Dorsolateral prefrontal cortex (tissue), 120 donors: ENCODE measurements at regions of chr5 and their contacts with region 1.

Region 1: GRCh38 chr5:181243512-181244343 is at the start of gene RACK1:
- DNase-seq: peak; percentile 81 to 94 (median 91)
- H3K4me3 ChIP-seq: peak within 1 kb of the TSS; percentile 60 to 96 (median 84)
- H3K27ac ChIP-seq: peak within 1 kb of the TSS; percentile 51 to 99 (median 97)
- H3K27me3 ChIP-seq: no peaks in the 10 kb centered on the region
- CTCF ChIP-seq: peak in 23 of 56 donors; percentile 7 to 42 (median 22)
- total RNA-seq, gene RACK1: 308 to 570 (median 390) TPM

Region 2: DNA sequence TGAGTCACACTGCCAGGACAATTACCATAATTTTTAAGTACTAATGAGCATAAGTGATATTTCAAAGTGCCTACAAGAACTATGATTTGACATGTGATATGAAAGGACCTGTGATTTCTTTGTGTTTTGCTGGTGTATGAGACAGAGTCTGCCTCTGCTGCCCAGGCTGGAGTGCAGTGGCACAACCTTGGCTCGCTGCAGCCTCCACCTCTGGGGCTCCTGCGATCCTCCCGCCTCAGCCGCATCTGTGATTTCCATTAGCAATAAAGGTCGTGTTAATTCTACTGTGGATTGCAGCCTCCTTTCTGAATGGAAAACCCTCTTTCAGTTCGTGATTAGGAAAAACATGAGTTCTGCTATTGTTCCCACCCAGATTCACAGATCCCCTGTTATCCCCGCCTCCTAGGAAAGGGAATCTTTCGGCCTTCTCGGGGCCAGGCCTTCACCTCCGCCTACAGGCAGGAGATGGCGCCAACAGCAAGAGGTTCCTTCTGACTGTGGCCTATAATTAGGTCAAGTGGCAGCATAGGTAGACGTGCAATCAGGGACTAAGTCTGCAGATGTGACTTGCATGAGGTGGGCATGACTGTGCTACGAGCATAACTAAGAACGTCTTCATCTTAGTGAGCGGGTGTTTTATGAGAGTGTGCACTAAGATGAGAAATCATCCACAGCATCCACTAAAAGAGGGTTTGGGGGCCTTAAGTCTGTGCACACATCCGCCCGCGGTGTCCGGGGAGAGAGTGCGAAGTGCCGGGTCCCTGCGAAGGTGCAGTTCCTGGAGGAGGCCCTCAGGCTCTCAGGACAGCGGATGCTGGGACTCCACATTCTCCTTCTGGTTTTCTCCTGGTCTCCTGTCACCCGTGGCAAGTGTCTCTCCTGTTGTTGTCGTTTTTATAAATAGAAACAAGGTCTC is 61.8 kb before region 1 on chr5:
- intact Hi-C with region 1: loop called in 1 of 2 experiments (anchors 10 kb)
- DNase-seq: peak in 3 of 10 donors; percentile 23 to 69 (median 34)
- H3K4me3 ChIP-seq: no peak overlapping the region
- H3K27ac ChIP-seq: no peak overlapping the region
- H3K27me3 ChIP-seq: peaks cover 0 to 3% (median 0%) of the 10 kb centered on the region in 45 donors
- CTCF ChIP-seq: peak; percentile 14 to 77 (median 60)

Region 3: GRCh38 chr5:181260387-181261319 is 16.9 kb after region 1 on chr5 and contains the start of gene TRIM52:
- intact Hi-C with region 1: loop called in 1 of 2 experiments (anchors 2 kb)
- DNase-seq: peak; percentile 84 to 95 (median 92)
- H3K4me3 ChIP-seq: peak within 1 kb of the TSS; percentile 64 to 100 (median 95)
- H3K27ac ChIP-seq: peak within 1 kb of the TSS; percentile 75 to 99 (median 94)
- H3K27me3 ChIP-seq: no peaks in the 10 kb centered on the region
- CTCF ChIP-seq: peak in 14 of 56 donors; percentile 10 to 37 (median 19)
- total RNA-seq, gene TRIM52: 19.8 to 50.9 (median 31.6) TPM